ENCODE measurements at regions of chr4 and their contacts with region 1.

Region 1: DNA sequence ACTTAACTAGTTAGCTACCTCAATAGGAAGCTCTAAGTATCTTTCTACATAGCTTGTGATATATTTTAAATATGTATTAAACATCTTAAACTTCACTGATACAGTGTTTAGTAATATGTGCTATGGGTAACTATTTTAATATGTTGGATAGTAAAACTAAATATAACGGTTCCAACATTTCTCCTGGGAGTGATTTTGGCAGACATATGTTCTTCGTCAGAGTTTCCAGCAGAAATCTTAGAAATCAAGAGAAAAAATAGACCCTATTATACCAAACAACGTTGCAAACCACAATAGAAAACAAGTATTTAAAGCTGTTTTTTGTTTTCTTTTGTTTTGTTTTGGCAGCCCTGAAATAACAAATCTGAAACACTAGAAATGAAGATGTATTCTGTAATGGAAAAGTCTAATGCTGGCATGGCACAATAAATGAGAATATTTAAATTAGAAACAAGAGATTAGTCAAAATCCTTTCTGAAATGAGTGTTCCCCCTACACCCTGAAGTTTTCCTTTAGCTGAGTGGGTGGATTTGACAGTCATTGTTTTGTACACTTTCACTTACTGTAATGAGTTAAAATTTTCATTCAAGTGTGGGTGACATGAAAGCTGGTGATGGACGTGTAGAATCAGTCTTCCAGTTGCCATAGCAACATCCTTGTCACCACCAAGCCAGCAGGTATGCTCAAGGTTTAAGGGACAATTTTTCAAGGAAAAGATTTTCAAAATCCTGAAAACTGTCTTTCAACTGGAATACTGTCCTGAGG is 233.5 kb downstream of the SCFD2 start:
- DNase-seq: no peak
- H3K4me3 Mint-ChIP-seq: no peak overlapping the region
- H3K27ac Mint-ChIP-seq: peak overlapping the region; percentile 79
- H3K4me1 Mint-ChIP-seq: peaks cover 31% of the 10 kb centered on the region
- H3K27me3 Mint-ChIP-seq: no peaks in the 10 kb centered on the region

Region 2: GRCh38 chr4:53037892-53038291 is 94.4 kb before region 1 on chr4:
- intact Hi-C with region 1: loop called (anchors 1 kb)
- DNase-seq: no peak
- H3K4me3 Mint-ChIP-seq: no peak overlapping the region
- H3K27ac Mint-ChIP-seq: no peak overlapping the region
- H3K4me1 Mint-ChIP-seq: peaks cover 6% of the 10 kb centered on the region
- H3K27me3 Mint-ChIP-seq: no peaks in the 10 kb centered on the region

Region 3: GRCh38 chr4:53113431-53114225 is 18.7 kb before region 1 on chr4:
- intact Hi-C with region 1: loop called (anchors 1 kb)
- DNase-seq: no peak
- H3K4me3 Mint-ChIP-seq: no peak overlapping the region
- H3K27ac Mint-ChIP-seq: peak overlapping the region; percentile 86
- H3K4me1 Mint-ChIP-seq: peaks cover 27% of the 10 kb centered on the region
- H3K27me3 Mint-ChIP-seq: no peaks in the 10 kb centered on the region

Region 4: DNA sequence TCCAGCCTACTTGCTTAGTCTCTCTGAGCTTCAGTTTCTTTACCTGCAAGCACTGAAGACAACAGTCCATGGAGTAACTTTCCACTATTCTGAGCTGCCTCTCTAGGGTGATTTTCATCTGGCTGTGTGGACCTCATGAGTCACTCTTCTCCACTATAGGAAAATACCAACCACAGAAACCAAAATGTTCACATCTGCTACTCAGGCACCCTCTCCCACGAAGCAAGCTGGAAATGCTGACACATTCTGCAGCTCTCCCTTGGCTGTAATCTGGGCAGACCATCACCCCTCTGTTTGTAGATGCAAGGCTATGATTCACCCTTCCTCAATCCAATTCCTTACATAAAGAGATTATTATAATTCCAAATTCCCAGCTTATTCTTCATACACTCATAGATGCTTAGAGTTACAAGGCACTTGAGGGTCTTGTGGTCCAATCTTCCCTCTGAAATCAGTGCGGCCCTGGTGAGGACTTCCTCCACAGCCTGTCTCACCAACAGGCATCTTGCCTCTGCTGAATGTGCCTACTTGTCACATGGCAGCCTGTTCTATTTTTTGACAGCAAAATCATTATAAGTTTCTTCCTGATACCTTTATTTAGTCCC is 556.0 kb after region 1 on chr4:
- intact Hi-C with region 1: loop called (anchors 1 kb)
- DNase-seq: no peak
- H3K4me3 Mint-ChIP-seq: no peak overlapping the region
- H3K27ac Mint-ChIP-seq: peak overlapping the region; percentile 59
- H3K4me1 Mint-ChIP-seq: peaks cover 9% of the 10 kb centered on the region
- H3K27me3 Mint-ChIP-seq: peaks cover 10% of the 10 kb centered on the region